HEK293T (cell line): ENCODE measurements at regions of chr1 and their contacts with region 1.

Region 1: GRCh38 chr1:22025368-22026155 is 24.1 kb downstream of the CELA3A start:
- DNase-seq: peak; percentile 84

Region 2: GRCh38 chr1:21871974-21872373 is 153.6 kb before region 1 on chr1:
- CTCF ChIA-PET with region 1: no interaction called
- POLR2A ChIA-PET with region 1: no interaction called
- DNase-seq: no peak

Region 3: DNA sequence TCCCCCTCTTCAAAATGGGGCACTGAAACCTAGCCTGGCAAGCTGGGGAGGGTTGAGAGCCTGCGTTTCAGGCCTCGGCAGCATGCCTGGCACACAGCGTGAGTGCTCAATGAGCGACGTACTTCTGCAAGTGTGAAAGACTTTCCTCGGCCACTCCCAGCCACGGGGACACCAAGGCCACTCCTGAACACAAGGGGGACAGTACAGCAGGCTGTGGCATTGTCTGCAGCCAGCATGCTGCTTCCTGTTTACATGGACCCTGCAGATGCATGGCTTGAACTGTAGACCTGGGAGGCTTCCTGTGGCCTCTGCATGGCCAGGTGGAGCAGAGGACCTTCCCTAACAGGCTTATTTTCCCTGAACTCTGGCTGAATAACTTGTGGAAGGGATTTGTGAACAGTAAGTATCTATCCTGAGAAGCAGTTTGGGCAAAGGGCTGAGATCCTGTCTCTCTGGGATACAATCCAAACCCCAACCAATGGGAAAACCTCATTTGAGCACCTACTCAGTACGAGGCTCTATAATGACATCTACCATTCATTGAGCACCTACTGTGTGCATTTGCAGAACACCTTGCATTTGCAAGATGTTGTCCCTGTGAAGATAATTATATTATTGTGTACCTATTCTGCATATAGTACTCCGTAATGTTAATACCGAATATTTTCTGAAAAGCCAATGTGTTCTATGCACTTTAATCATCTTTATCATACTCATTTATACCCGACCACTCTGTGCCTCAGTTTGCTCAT is 78.5 kb before region 1 on chr1:
- CTCF ChIA-PET with region 1: no interaction called
- POLR2A ChIA-PET with region 1: no interaction called
- DNase-seq: no peak

Region 4: DNA sequence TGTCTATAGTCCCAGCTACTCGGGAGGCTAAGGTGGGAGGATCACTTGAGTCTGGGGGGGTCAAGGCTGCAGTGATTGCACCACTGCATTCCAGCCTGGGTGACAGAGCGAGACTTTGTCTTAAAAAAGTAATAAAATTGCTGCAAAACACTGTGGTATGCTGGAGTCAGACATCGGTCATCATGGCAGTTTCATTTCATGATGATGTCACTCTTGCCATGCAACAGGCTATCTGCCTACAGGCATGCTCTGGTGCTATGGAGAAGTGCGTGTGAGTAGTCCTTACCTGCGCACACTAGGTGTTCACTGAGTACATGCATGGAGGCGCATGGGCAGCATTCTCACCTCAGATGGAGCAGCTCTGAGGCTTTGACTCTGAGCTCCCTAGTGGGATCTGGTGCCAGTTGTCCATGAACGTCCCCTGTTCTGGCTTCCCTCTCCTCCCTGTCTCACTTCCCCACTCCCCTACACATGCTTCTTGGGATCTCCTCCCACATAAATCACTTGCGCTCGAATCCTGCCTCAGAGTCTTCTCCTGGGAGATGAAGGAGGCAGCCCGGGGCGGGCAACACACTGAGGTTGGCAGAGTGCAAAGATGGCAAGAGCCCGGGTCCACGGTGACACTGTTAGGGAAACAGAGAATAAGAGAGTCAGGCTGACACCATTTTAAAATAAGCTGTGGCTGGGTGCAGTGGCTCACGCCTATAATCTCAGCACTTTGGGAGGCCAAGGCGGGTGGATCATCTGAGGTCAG is 59.1 kb before region 1 on chr1:
- CTCF ChIA-PET with region 1: no interaction called
- POLR2A ChIA-PET with region 1: no interaction called
- DNase-seq: no peak

Region 5: GRCh38 chr1:22039594-22040285 is 14.2 kb after region 1 on chr1:
- CTCF ChIA-PET with region 1: no interaction called
- POLR2A ChIA-PET with region 1: interaction called, 14 read pairs
- DNase-seq: peak; percentile 36

Region 6: GRCh38 chr1:22052115-22053016 is 26.8 kb after region 1 on chr1 and contains the start of gene CDC42:
- CTCF ChIA-PET with region 1: interaction called, 3 read pairs
- POLR2A ChIA-PET with region 1: interaction called, 58 read pairs
- DNase-seq: peak; percentile 96

Region 7: DNA sequence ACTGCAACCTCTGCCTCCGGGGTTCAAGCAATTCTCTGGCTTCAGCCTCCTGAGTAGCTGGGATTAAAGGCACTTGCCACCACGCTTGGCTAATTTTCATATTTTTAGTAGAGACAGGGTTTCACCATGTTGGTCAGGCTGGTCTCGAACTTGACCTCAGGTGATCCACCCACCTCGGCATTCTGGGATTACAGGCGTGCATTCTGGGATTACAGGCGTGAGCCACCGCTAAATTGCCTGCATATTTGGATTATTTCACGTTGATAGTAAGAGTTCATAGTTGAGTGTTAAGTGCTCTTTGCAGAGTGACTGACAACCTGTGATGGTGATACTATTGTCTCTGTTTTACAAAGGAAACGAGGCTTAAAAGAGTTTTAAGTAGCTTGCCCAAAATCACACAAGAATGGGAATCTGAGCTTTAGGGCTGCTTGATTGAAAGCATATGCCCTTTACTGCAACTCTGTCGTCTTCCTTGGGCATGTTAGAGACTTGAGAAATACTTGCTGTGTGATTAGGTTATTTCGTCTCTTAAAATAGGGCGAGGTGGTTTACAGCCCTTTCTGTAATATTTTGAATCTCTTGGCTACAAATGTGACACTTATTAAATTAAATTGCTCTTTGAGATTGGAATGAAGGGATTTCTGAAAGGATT is 39.3 kb after region 1 on chr1:
- CTCF ChIA-PET with region 1: no interaction called
- POLR2A ChIA-PET with region 1: interaction called, 10 read pairs
- DNase-seq: no peak

Region 8: GRCh38 chr1:22195802-22196440 is 170.4 kb after region 1 on chr1:
- CTCF ChIA-PET with region 1: no interaction called
- POLR2A ChIA-PET with region 1: no interaction called
- DNase-seq: no peak